ENCODE measurements at regions of chr14 and their contacts with region 1.

Region 1: DNA sequence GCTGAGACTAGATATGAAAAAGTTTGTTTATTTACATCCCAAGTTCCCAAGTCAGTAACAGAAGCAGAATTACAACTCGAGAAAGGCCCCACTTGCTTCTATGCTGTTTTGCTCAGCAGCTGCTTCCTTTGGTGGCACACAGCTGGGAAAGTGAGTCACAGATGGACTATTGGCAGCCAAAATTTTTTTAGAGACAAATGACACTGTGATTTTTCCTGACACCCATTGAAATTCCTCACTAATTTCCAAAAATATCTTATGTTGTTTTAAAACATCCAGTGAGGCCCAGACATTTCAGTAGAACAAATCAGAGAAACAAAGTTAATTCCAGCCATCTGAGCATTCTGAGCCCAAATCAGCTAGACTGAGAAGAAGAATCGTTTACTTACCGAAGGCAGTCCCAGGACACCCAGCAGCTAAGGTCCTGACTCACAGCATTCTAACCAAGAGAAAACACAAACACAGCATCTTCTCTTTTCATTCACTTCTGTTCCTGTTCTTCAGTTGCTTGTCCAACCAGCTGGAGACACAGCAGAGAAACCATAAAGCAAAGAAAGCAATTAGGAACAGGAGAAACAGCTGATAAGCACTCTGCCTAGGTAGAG is 188.3 kb downstream of the DAD1 start:
- DNase-seq: no peak
- H3K4me3 ChIP-seq: no peak overlapping the region
- H3K27ac ChIP-seq: peak overlapping the region; percentile 27 to 66
- H3K4me1 ChIP-seq: peaks cover 0 to 3% of the 10 kb centered on the region in 2 donors
- H3K27me3 ChIP-seq: no peaks in the 10 kb centered on the region
- CTCF ChIP-seq: no peak

Region 2: GRCh38 chr14:22427771-22428231 is 27.0 kb after region 1 on chr14:
- intact Hi-C with region 1: loop called (anchors 2 kb)
- DNase-seq: no peak
- H3K4me3 ChIP-seq: peak overlapping the region; percentile 23 to 44
- H3K27ac ChIP-seq: peak overlapping the region; percentile 33 to 46
- H3K4me1 ChIP-seq: peaks cover 0 to 23% of the 10 kb centered on the region in 2 donors
- H3K27me3 ChIP-seq: no peaks in the 10 kb centered on the region
- CTCF ChIP-seq: no peak

Measured in ascending aorta (tissue), 2 donors.